Activated CD4-positive, alpha-beta T cell treated with anti-CD3 and anti-CD28 coated beads, Interleukin-2, amount 10 ng/mL, durations not matched to agents 24 days and 14 days (primary cell): ENCODE measurements at regions of chr1 and their contacts with region 1.

Region 1: GRCh38 chr1:89780721-89781120 is 40.1 kb upstream of the LRRC8D start:
- DNase-seq: peak; percentile 68
- H3K4me3 Mint-ChIP-seq: peak overlapping the region; percentile 64
- H3K27ac Mint-ChIP-seq: peak overlapping the region; percentile 95
- H3K4me1 Mint-ChIP-seq: peaks cover 40% of the 10 kb centered on the region
- H3K27me3 Mint-ChIP-seq: no peaks in the 10 kb centered on the region

Region 2: GRCh38 chr1:89524369-89525168 is 256.2 kb before region 1 on chr1 and contains the start of gene LRRC8B:
- intact Hi-C with region 1: loop called (anchors 1 kb)
- DNase-seq: peak; percentile 98
- H3K4me3 Mint-ChIP-seq: no peak within 1 kb of the TSS
- H3K27ac Mint-ChIP-seq: peak within 1 kb of the TSS; percentile 95
- H3K4me1 Mint-ChIP-seq: peaks cover 34% of the 10 kb centered on the region
- H3K27me3 Mint-ChIP-seq: no peaks in the 10 kb centered on the region
- total RNA-seq, gene LRRC8B: 74.5 and 76.8 TPM in 2 replicates

Region 3: DNA sequence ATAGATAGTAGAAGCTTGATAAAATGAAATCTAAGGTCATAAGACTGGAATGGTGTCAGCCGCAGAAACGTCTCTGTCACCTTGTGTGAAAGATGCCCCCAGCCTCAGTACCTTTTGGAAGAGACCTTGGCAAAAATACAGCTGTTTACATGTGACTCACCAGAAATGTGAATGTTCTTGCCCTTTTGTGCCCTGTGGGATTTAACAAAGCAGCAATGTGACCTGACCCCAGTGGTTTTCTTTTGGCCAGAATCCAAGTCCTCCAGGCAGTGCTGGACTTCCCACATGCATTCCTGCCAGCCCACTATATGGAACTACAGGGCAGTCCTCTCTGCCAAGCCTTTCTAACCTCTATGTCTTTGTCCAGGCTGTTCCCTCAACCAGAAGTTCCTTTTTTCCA is 175.0 kb before region 1 on chr1:
- intact Hi-C with region 1: loop called (anchors 1 kb)
- DNase-seq: no peak
- H3K4me3 Mint-ChIP-seq: peak overlapping the region; percentile 64
- H3K27ac Mint-ChIP-seq: peak overlapping the region; percentile 99
- H3K4me1 Mint-ChIP-seq: peaks cover 86% of the 10 kb centered on the region
- H3K27me3 Mint-ChIP-seq: no peaks in the 10 kb centered on the region

Region 4: DNA sequence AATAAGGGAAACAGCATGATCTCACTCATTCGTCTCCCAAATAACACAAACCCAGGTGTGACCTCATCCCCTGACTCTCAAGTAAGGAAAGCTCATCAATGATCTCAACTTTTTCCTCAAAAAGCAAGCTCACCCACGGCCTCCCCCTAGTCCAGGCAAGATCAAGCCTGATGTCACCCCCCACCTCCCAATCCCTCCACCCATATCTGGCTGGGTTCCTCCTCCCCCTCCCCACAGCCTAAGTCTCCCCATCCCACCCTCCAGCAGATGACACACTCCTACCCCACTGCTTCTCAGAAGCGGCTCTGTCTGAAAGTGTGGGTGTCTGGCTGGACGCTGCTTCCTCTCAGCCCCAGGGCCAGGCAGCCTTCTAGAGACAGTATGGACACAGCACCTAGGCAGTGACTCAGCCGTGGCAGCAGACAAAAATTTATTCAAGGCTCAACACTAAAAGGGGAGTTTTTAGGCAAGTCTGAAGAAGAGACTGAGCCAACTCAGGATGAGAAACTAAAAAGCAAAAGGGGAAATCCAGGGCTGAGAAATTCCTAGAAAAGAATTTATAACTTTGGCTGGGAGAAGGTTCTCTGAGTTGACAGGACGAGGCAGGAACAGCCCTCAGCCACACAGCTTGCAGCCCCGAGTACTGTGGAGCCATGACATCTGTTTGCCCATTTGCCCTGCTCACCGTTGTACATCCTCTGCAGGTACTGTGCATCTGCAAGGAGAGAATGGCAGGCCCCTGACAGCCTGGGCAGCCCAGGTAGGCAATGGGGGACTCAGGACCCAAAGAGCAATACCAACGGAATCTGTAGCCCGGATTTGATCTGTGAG is 41.5 kb before region 1 on chr1:
- intact Hi-C with region 1: loop called (anchors 2 kb)
- DNase-seq: peak; percentile 76
- H3K4me3 Mint-ChIP-seq: peak overlapping the region; percentile 78
- H3K27ac Mint-ChIP-seq: peak overlapping the region; percentile 94
- H3K4me1 Mint-ChIP-seq: peaks cover 40% of the 10 kb centered on the region
- H3K27me3 Mint-ChIP-seq: no peaks in the 10 kb centered on the region

Region 5: GRCh38 chr1:89820422-89821321 is 40.0 kb after region 1 on chr1 and contains the start of gene LRRC8D:
- intact Hi-C with region 1: loop called (anchors 1 kb)
- DNase-seq: peak; percentile 92
- H3K4me3 Mint-ChIP-seq: peak within 1 kb of the TSS; percentile 84
- H3K27ac Mint-ChIP-seq: peak within 1 kb of the TSS; percentile 82
- H3K4me1 Mint-ChIP-seq: peaks cover 29% of the 10 kb centered on the region
- H3K27me3 Mint-ChIP-seq: peaks cover 19% of the 10 kb centered on the region
- total RNA-seq, gene LRRC8D: 43.6 and 44.9 TPM in 2 replicates

Region 6: GRCh38 chr1:89855413-89856123 is 74.8 kb after region 1 on chr1:
- intact Hi-C with region 1: loop called (anchors 1 kb)
- DNase-seq: peak; percentile 73
- H3K4me3 Mint-ChIP-seq: no peak overlapping the region
- H3K27ac Mint-ChIP-seq: no peak overlapping the region
- H3K4me1 Mint-ChIP-seq: peaks cover 5% of the 10 kb centered on the region
- H3K27me3 Mint-ChIP-seq: no peaks in the 10 kb centered on the region

Region 7: GRCh38 chr1:89994805-89995597 is 214.3 kb after region 1 on chr1 and contains the start of gene ZNF326:
- intact Hi-C with region 1: loop called (anchors 2 kb)
- DNase-seq: peak; percentile 99
- H3K4me3 Mint-ChIP-seq: peak within 1 kb of the TSS; percentile 94
- H3K27ac Mint-ChIP-seq: peak within 1 kb of the TSS; percentile 98
- H3K4me1 Mint-ChIP-seq: peaks cover 35% of the 10 kb centered on the region
- H3K27me3 Mint-ChIP-seq: peaks cover 6% of the 10 kb centered on the region
- total RNA-seq, gene ZNF326: 36.8 and 38.1 TPM in 2 replicates